Adrenal gland (tissue), 19 donors: ENCODE measurements at regions of chr5 and their contacts with region 1.

Region 1: GRCh38 chr5:91419571-91420537 is 36.7 kb upstream of the ARRDC3 start:
- DNase-seq: peak; percentile 42 to 85 (median 69)
- H3K4me3 ChIP-seq: no peak overlapping the region
- H3K27ac ChIP-seq: no peak overlapping the region
- H3K4me1 ChIP-seq: no peaks in the 10 kb centered on the region
- H3K27me3 ChIP-seq: no peaks in the 10 kb centered on the region
- CTCF ChIP-seq: peak; percentile 67 to 88 (median 80)
- POLR2A ChIP-seq: no peak

Region 2: DNA sequence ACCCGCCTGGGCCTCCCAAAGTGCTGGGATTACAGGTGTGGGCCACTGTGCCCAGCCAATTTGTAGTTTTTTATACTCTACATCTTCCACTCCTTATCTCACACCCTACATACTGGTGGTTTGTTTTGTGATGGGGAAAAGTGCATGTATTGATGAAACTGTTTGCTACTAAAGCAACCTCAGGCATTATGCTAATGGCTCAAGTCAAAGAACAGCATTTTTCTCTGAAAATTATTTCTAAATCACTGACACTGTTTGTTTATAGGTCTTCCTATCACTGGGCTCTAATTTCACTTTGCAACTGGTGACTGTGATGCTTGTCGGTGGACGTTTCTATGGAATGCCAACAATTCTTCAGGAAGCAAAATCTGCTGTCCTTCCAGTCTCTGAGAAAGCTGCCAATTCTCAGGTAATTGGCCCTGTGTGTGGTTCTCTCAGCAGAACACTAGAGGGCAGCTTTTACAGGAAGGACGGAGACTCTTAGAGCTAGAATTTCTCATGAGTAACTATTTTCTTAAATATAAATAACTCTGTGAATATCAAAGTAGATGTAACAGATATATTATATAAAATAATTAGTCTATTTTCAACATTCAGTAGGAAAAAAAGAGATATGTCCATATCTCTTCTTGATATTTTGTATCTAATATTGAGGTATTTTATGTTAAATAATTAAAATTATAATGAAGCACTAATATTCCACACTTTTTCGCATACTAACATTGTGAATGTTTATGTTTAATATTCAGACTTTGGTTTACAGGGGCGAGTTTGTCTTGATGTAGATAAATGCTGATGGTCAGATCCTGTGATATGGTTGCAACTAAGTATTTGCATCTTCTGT is 617.2 kb before region 1 on chr5:
- intact Hi-C with region 1: loop called in 1 of 2 experiments (anchors 5 kb)
- DNase-seq: peak; percentile 18 to 62 (median 36)
- H3K4me3 ChIP-seq: no peak overlapping the region
- H3K27ac ChIP-seq: no peak overlapping the region
- H3K4me1 ChIP-seq: no peaks in the 10 kb centered on the region
- H3K27me3 ChIP-seq: no peaks in the 10 kb centered on the region
- CTCF ChIP-seq: peak; percentile 55 to 77 (median 62)
- POLR2A ChIP-seq: no peak

Region 3: GRCh38 chr5:91245871-91246270 is 174.0 kb before region 1 on chr5:
- intact Hi-C with region 1: no loop called
- DNase-seq: no peak
- H3K4me3 ChIP-seq: no peak overlapping the region
- H3K27ac ChIP-seq: no peak overlapping the region
- H3K4me1 ChIP-seq: no peaks in the 10 kb centered on the region
- H3K27me3 ChIP-seq: no peaks in the 10 kb centered on the region
- CTCF ChIP-seq: no peak
- POLR2A ChIP-seq: no peak